AG04449 (cell line): ENCODE measurements at regions of chr15 and their contacts with region 1.

Region 1: GRCh38 chr15:66619151-66619903 is 53.5 kb upstream of the LCTL start:
- DNase-seq: no peak
- H3K4me3 ChIP-seq: no peak overlapping the region
- CTCF ChIP-seq: peak; percentile 93

Region 2: DNA sequence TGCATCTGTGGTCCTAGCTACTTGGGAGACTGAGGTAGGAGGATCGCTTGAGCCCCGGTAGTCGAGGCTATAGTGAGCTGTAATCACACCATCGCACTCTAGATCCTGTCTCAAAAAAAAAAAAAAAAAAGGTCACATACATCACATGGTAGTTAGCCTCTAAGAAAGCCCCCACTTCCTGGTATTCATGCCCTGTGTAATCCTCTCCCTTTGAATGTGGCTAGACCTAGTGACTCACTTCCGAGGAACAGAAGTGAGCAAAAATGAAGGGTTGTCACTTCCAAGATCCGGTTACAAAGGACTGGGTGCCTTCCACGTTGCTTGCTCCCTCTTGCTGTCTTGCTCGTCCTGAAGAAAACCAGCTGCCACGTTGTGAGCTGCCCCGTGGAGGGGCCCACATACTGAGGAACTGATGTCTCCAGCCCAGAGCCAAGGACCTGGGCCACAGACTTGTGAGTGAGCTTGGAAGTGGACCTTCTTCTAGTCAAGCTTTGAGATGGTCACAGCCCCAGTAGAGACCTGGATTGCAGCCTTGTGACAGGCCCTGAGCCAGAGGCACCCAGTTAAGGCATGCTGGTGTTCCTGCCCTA is 40.9 kb before region 1 on chr15:
- CTCF ChIA-PET with region 1: no interaction called
- POLR2A ChIA-PET with region 1: no interaction called
- DNase-seq: no peak
- H3K4me3 ChIP-seq: no peak overlapping the region
- CTCF ChIP-seq: no peak

Region 3: GRCh38 chr15:66630801-66631351 is 11.5 kb after region 1 on chr15:
- CTCF ChIA-PET with region 1: interaction called, 66 read pairs
- POLR2A ChIA-PET with region 1: no interaction called
- DNase-seq: no peak
- H3K4me3 ChIP-seq: no peak overlapping the region
- CTCF ChIP-seq: no peak

Region 4: DNA sequence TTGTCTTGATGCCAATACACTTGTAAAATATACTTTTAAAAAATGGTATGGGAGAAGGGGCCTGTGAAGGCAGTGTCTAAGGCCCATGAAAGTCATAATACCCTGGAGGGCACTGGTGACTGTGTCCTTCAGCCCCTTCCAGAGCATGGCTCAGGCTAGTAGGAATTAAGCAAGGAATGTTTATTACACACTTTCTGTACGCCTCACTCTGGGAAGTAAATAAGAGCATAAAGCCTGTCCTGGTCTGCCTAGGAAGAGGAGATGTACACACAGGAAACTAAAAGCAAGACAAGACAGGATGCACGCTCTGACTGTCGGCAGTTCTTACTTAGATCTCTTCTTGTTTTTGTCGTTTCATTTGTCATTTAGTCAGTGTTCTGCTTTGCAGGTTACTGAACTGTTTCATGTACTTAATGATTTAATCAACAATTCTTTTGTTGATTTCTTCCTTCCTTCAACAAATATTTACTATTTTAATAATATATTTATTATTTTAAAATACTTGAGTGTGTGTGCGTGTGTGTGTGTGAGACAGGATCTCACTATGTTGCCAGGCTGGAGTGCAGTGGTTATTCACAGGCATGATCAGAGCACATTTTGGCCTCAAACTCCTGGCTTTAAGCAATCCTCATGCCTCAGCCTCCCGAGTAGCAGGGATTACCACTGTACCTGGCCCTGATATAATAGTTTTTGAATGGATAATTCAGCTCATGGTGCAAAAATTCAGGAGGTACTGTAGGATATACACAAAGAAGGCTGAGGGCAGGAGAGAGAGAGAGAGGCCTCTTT is 73.7 kb after region 1 on chr15:
- CTCF ChIA-PET with region 1: interaction called, 48 read pairs
- POLR2A ChIA-PET with region 1: no interaction called
- DNase-seq: no peak
- H3K4me3 ChIP-seq: no peak overlapping the region
- CTCF ChIP-seq: no peak

Region 5: GRCh38 chr15:66706225-66706732 is 87.0 kb after region 1 on chr15:
- CTCF ChIA-PET with region 1: interaction called, 48 read pairs
- POLR2A ChIA-PET with region 1: interaction called, 4 read pairs
- DNase-seq: no peak
- H3K4me3 ChIP-seq: peak overlapping the region; percentile 83
- CTCF ChIP-seq: peak; percentile 44

Region 6: DNA sequence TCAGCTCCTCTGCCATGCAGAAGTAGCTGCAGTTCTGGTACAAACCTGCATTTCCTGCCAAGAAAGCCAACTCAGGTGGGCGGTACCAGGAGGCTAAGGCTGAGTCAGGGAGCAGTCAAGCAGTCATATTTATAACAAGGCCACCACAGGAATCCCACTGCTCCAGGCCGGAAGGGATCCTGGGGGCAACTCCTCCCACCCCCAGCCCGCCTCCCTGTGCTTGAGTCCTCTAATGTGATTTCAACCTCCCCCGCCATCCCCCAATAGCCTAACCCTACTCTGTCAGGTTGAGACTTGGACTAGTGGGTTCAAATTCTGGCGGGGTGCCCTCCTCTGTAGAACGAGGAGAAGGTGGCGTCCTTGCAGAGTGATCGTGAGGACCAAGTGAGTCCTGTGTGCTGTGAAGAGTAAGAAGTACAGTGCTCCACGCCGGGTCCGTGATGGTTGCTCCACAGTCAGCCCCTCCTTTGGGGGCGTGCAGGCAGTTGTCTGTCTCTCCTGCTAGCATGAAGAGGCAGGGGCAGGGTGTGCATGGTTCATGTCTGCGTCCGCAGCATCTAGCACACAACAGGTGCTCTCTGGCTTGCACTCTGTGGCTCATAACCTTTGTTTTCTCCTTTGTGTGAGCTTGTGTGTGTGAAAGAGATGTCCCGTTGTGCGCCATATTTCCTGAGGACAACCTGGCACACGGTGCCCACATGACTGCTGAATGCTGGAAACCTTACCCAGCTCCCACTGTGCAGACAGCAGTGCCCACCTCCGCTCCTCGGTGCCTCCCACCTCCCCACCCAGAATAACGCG is 161.0 kb after region 1 on chr15:
- CTCF ChIA-PET with region 1: interaction called, 66 read pairs
- POLR2A ChIA-PET with region 1: no interaction called
- DNase-seq: no peak
- H3K4me3 ChIP-seq: no peak overlapping the region
- CTCF ChIP-seq: no peak